Activated CD4-positive, alpha-beta T cell treated with anti-CD3 and anti-CD28 coated beads for 36 hours (primary cell): ENCODE measurements at regions of chr15 and their contacts with region 1.

Region 1: DNA sequence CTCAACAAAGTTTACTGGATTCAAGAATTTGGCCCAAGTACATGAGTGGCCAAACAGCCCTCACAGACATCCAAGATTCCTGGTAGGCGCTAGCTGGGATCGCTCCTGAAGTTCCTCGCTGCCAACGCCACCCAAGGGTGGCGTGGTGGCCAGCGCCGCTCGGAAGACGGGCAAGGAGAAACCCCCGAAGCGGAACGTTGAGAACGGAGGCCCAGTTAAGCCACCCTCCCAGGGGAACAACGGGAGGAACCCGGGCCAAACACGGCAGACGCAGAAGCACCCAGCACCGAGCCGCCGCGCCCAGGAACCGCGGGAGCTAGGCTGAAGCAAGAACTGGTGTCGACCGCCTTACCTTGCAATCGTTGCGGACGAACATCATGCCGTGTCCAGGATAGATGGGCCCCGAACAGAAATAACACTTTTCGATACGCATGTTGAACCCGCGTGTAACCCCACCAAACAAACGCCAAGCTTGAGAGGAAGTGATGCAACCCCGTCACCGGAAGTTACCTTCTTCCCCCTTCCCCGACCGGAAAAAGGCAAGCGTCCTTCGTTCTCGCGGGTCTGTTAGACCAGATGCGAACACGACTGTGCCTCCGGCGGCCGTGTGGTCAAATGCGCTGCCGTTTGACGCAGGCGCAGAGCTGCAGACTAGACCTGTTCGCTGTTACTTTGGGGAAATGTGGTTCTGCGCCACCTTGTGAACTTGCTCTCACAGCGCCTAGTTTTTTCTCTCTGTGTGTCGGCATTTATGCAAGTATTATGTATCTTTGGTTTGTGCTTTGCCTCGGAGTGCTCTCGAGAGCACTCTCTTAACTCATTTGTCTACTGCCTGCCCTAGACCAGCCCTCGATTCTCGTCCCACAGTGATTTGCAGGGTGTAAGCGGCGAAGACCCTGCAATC is at the start of gene RSL24D1:
- DNase-seq: peak; percentile 97
- ATAC-seq: peak; percentile 99
- H3K4me3 Mint-ChIP-seq: no peak within 1 kb of the TSS
- H3K27ac Mint-ChIP-seq: no peak within 1 kb of the TSS
- H3K4me1 Mint-ChIP-seq: peaks cover 17% of the 10 kb centered on the region
- H3K27me3 Mint-ChIP-seq: no peaks in the 10 kb centered on the region
- total RNA-seq, gene RSL24D1: 152 to 188 TPM

Region 2: DNA sequence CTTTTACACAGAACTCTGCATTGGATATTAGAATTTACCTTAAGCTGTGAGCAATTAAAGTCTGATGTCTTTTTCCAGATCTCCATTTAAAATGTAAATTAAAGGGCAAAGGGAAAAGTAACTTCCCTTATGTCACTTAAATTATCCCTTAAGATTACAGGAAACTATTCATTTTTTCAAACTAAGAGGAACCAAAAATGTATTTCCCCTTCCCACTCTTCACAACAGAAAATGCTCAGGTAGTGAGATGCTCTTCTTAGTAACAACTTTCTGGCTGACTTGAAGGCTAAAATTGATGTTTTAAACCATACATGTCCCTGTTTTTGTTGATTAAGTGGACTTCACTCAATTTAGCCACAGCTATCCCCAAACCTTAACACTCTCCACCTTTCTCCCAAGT is 17.6 kb before region 1 on chr15:
- CTCF ChIA-PET with region 1: interaction called, 6 read pairs
- POLR2A ChIA-PET with region 1: no interaction called
- intact Hi-C with region 1: loop called in 1 of 2 experiments (anchors 2 kb)
- DNase-seq: no peak
- ATAC-seq: no peak
- H3K4me3 Mint-ChIP-seq: no peak overlapping the region
- H3K27ac Mint-ChIP-seq: peak overlapping the region; percentile 6
- H3K4me1 Mint-ChIP-seq: peaks cover 4% of the 10 kb centered on the region
- H3K27me3 Mint-ChIP-seq: no peaks in the 10 kb centered on the region

Region 3: DNA sequence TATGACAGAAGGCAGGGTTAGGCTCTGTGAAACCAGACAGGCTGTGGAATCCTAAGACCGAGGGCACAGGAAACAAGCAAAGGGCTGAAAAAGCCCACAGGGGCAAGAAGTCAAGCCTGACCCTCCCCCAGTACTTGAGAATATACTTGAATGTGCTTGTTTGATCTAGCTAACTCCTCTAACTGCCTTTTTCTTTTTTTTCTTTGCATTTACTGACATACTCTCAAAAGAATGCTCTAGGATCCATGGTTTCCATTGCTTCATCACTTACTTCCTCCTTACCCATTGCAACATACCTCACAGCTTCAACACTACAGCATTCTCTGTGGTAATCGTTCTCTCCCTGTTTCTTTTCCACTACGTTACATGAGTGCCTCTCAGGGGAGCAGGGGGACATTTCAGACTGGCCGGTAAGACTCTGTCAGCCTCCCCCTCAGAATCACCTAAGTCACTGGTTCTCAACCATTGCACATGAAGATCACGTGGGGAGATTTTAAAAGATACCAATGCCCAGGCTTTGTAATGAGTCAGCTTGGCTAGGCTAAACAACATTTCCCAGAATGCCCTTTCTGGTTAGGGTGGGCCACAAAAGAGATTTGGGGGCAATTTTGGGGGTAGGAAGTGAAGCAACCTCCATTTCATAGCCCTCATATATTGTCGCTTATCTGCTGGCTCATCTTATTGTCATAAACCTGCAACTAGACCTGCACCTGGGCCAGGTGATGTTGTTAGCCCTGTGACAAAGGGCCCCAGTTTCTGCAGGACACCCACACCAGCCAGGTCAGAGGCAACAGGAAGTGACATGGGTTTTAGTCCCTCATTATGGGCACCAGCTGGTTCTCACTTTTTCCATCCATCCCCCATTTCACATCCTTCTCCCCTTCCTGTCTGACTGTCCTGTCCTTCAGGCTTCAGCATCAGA is 24.6 kb after region 1 on chr15:
- CTCF ChIA-PET with region 1: interaction called, 6 read pairs
- POLR2A ChIA-PET with region 1: no interaction called
- intact Hi-C with region 1: loop called in 1 of 2 experiments (anchors 1 kb)
- DNase-seq: peak; percentile 60
- ATAC-seq: peak; percentile 59
- H3K4me3 Mint-ChIP-seq: no peak overlapping the region
- H3K27ac Mint-ChIP-seq: peak overlapping the region; percentile 88
- H3K4me1 Mint-ChIP-seq: peaks cover 65% of the 10 kb centered on the region
- H3K27me3 Mint-ChIP-seq: no peaks in the 10 kb centered on the region

Region 4: DNA sequence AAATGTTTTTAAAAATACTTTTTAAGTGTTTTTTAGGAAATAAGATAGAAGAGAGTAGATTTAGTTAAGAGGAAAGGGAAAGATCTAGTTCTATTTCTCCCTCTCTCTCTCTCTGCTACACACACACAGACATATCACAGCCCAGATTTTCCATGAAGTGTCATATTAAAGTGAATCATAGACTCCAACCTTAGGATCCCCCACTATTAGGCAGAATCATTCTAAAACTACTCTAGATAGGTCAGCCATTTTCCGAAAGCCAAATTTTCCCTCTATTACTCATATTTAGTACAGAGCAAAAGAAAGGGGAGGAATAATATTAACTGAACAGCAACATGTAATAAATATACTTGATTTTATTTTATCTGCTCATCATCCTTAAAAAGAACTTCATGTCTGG is 45.2 kb after region 1 on chr15:
- CTCF ChIA-PET with region 1: no interaction called
- POLR2A ChIA-PET with region 1: no interaction called
- intact Hi-C with region 1: loop called in 1 of 2 experiments (anchors 1 kb)
- DNase-seq: no peak
- ATAC-seq: peak; percentile 33
- H3K4me3 Mint-ChIP-seq: no peak overlapping the region
- H3K27ac Mint-ChIP-seq: peak overlapping the region; percentile 88
- H3K4me1 Mint-ChIP-seq: peaks cover 78% of the 10 kb centered on the region
- H3K27me3 Mint-ChIP-seq: no peaks in the 10 kb centered on the region

Region 5: DNA sequence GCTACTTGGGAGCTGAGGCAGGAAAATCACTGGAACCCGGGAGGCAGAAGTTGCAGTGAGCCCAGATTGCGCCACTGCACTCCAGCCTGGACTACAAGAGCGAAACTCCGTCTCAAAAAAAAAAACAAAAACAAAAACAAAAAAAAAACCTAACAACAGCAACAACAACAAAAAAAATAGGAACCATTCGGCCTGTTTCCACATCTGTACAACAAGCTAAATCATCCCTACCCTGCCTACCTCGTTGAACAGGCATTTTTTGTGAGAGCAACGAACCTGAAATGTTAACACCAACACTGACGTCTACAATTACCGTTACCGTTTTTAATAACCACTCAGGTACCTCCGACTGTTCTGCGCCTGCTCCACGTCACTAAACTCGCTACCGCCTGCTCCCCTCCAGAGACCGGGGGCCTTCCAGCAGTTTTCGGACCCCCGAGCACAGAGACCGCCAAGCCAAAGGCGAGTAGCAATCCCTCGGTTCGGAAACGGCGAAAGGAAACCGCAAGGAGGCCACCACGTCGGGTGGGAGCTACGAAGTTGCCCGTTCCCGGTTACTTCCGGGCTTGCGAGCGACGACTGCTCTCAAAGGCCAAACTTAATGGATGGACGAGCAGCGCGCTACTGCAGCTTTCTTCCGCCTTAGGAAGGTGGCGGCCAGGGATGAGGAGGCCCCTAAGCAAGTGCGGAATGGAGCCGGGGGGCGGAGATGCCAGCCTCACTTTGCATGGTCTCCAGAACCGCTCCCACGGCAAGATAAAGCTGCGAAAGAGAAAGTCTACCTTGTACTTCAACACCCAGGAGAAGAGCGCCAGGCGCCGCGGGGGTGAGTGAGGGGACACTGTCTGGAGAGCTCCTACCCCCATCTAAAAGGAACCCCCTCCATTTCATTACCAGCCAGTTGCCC is 122.1 kb after region 1 on chr15 and contains the starts of genes PIGB and PIGBOS1:
- CTCF ChIA-PET with region 1: interaction called, 11 read pairs
- POLR2A ChIA-PET with region 1: interaction called, 4 read pairs
- intact Hi-C with region 1: loop called in 1 of 2 experiments (anchors 1 kb)
- DNase-seq: peak; percentile 88
- ATAC-seq: peak; percentile 89
- H3K4me3 Mint-ChIP-seq: peak within 1 kb of the TSS; percentile 97
- H3K27ac Mint-ChIP-seq: peak within 1 kb of the TSS; percentile 99
- H3K4me1 Mint-ChIP-seq: peaks cover 51% of the 10 kb centered on the region
- H3K27me3 Mint-ChIP-seq: no peaks in the 10 kb centered on the region
- total RNA-seq, gene PIGB: 19.8 to 21.1 TPM
- total RNA-seq, gene PIGBOS1: 8.8 to 11.0 TPM

Region 6: DNA sequence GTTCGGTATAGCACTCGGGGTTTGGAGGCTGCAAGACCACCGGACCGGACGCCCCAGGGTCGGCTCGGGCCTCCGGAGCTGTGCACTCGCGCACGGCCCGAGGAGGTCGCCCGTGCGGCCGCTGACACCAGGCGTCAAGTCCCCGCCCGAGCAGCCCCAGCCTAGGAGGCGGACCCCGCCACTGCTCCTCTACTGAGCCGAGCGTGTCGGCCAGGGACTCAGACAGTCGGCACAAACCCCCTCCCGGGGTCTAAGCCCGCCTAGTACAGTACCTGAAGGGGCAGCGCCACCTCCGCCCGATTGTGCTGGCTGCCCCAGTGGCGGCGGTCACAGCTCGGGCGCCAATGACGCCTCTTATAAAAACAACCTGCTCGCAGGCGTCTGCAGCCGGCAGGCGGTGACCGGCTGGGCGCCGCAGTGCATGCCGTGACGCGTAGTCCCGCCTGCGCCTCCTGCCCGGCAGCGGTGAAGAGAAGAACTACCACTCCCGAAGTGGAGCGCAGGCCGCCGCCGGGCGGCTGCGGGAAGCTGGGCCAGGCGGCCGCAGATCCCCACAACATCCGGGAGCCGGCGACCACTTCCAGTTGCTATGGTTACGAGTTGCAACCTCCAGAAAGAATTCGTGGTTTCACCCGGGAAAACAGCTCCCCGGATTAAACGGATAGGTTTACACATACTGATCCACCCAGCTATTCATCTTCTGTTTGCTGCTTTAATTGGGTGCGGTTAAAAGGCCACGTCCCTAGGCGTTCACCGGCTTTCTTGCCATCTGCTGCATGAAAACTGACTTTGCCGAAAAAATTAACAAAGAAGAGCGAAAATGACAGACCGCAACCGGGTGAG is 211.5 kb after region 1 on chr15 and contains the starts of genes CCPG1 and PIERCE2:
- CTCF ChIA-PET with region 1: interaction called, 11 read pairs
- POLR2A ChIA-PET with region 1: interaction called, 3 read pairs
- intact Hi-C with region 1: loop called (anchors 1 to 5 kb)
- DNase-seq: peak; percentile 95
- ATAC-seq: peak; percentile 93
- H3K4me3 Mint-ChIP-seq: peak within 1 kb of the TSS; percentile 87
- H3K27ac Mint-ChIP-seq: peak within 1 kb of the TSS; percentile 90
- H3K4me1 Mint-ChIP-seq: peaks cover 24% of the 10 kb centered on the region
- H3K27me3 Mint-ChIP-seq: no peaks in the 10 kb centered on the region
- total RNA-seq, gene CCPG1: 11.3 to 12.2 TPM
- total RNA-seq, gene PIERCE2: 0.34 to 0.81 TPM

Region 7: DNA sequence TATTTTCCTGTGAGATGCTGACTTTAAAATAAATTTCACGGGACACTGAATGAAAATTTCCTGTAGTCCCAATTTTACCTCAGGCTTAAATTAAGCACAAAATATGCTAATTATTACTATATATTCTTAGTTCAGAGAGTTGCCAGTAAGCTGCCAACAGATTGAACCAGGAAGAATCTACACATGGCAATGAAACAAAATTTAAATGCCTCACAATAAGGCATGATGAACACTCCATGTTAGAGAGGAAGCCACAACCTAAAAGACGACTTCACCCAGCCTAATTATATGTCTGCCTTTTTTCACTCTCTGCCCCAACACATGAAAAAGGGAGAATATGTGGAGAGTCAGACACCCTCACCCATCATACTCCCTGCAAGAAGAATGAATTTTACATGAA is 271.6 kb after region 1 on chr15:
- CTCF ChIA-PET with region 1: no interaction called
- POLR2A ChIA-PET with region 1: no interaction called
- intact Hi-C with region 1: no loop called
- DNase-seq: no peak
- ATAC-seq: no peak
- H3K4me3 Mint-ChIP-seq: no peak overlapping the region
- H3K27ac Mint-ChIP-seq: no peak overlapping the region
- H3K4me1 Mint-ChIP-seq: no peaks in the 10 kb centered on the region
- H3K27me3 Mint-ChIP-seq: no peaks in the 10 kb centered on the region

Region 8: DNA sequence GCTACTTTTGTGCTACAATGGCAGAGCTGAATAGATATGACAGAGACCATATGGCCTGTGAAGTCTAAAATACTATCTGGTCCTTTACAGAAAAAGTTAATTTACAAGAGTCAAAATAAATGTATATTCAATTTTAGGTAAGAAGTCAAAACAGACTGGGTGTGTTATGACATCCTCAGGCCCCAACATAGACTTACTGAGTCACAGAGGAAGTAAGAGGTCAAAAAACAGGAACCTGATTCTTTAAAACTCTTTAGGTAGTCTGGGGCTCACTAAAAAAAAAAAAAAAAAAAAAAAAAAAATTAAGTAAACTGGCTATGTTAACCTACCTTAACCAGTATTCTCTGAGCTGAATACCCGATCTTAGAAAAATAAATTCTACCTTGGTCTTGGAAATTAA is 298.2 kb after region 1 on chr15:
- CTCF ChIA-PET with region 1: no interaction called
- POLR2A ChIA-PET with region 1: no interaction called
- intact Hi-C with region 1: loop called in 1 of 2 experiments (anchors 5 kb)
- DNase-seq: no peak
- ATAC-seq: no peak
- H3K4me3 Mint-ChIP-seq: no peak overlapping the region
- H3K27ac Mint-ChIP-seq: no peak overlapping the region
- H3K4me1 Mint-ChIP-seq: peaks cover 7% of the 10 kb centered on the region
- H3K27me3 Mint-ChIP-seq: no peaks in the 10 kb centered on the region